ENCODE measurements at regions of chr20 and their contacts with region 1.

Region 1: DNA sequence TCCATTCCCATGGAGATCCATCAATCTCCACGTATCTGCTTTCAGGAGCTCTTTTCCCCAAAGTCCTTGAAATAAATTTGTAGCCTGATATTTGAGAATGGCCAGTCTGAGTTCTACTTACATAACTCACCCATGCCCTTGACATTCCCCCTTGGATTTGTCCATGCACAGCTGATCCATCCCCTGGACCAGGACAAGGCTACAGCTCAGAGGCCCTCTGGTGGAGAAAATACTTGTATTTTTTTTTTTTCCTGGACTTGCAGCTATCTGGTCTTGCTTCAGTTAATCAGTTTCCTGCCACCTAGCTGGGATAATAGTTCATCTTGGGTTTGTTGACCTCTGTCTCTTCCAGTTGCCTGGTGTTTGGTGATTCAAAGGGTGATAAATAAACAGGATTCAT is 467.6 kb downstream of the DHX35 start:
- DNase-seq: no peak
- H3K4me3 ChIP-seq: no peak overlapping the region
- H3K27ac ChIP-seq: no peak overlapping the region
- H3K4me1 ChIP-seq: no peaks in the 10 kb centered on the region
- H3K27me3 ChIP-seq: no peaks in the 10 kb centered on the region
- CTCF ChIP-seq: no peak
- POLR2A ChIP-seq: no peak

Region 2: GRCh38 chr20:38528167-38528566 is 901.5 kb before region 1 on chr20:
- intact Hi-C with region 1: loop called (anchors 5 kb)
- DNase-seq: no peak
- H3K4me3 ChIP-seq: no peak overlapping the region
- H3K27ac ChIP-seq: no peak overlapping the region
- H3K4me1 ChIP-seq: no peaks in the 10 kb centered on the region
- H3K27me3 ChIP-seq: no peaks in the 10 kb centered on the region
- CTCF ChIP-seq: no peak
- POLR2A ChIP-seq: no peak